Aorta (tissue), 5 donors: ENCODE measurements at regions of chr3 and their contacts with region 1.

Region 1: DNA sequence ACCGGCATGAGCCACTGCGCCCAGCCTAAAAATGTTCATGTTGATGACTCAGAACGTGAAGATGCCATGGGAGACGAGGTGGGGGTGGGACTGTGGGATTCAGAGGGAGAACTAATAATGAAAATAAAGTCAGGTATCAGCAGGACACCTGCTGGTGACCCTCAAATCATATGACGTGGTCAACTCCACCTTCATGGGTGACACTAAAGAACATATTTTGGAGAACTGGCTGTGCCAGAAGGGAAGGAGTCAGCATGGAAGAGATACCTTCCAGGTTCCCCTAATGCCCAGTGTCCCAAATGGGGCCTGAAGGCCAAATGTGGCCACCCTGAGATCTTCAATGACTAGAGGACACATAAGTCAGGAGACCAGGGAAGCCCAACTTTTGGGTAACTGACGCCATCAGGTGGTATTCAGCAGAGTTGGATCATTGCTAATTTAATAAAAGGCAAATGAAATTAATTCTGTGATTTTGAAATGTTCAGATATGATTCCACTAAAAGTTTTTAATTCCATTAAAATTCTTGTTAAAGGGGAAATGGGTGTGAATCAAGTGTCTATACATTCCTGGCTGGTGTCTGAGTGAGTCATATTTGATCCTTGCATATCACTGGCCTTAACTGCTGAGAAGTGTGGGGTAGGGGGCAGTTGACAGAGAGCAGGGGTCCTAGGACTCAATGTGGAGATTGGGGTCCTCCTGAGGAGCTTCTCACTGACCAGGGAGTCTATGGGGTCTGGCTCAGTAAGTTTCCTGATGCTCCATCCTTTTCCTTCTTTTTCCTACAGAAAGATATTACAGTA is 88.7 kb upstream of the GSK3B start:
- DNase-seq: no peak
- ATAC-seq: no peak
- H3K4me3 ChIP-seq: no peak overlapping the region
- H3K27ac ChIP-seq: no peak overlapping the region
- H3K4me1 ChIP-seq: no peaks in the 10 kb centered on the region
- H3K27me3 ChIP-seq: no peaks in the 10 kb centered on the region

Region 2: GRCh38 chr3:119161240-119161639 is 1021.7 kb before region 1 on chr3:
- intact Hi-C with region 1: no loop called
- DNase-seq: no peak
- ATAC-seq: no peak
- H3K4me3 ChIP-seq: no peak overlapping the region
- H3K27ac ChIP-seq: no peak overlapping the region
- H3K4me1 ChIP-seq: no peaks in the 10 kb centered on the region
- H3K27me3 ChIP-seq: no peaks in the 10 kb centered on the region

Region 3: DNA sequence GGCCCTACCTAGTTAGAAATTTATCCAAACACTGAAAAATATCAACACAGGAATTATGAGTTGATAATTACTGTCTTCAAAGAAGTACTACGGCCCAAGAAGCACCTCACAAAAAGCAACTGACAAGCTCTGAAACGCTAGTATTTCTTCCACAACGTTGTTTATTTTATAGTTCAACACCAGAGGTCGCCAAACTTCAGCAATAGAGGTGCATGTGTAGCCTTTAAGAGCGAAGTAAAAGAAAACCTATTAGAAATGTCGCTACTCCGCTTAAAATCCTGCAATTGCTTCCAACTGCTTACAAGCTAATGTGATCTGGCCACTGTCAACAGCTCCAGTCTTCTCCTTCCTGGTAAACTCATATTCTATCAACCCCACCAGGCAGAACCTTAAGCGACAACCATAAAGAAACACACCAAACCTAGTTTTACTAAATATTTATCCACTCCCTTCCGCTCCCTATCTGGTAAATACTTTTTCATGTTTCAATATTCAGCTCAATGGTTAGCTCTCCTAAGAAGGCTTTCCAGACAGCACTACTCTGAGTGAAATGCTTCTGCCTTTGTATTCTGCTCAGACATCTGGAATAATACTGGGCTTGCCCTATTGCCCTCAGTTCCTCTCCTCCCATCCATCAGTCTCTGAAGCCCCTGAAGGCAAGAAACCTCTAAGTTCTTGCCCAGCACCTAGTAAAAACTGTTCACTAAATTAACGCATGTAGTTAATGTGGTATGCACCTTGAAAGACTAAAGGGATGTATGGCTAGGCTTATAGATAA is 290.8 kb before region 1 on chr3:
- intact Hi-C with region 1: loop called (anchors 5 to 10 kb)
- DNase-seq: no peak
- ATAC-seq: peak; percentile 80
- H3K4me3 ChIP-seq: no peak overlapping the region
- H3K27ac ChIP-seq: no peak overlapping the region
- H3K4me1 ChIP-seq: no peaks in the 10 kb centered on the region
- H3K27me3 ChIP-seq: no peaks in the 10 kb centered on the region

Region 4: DNA sequence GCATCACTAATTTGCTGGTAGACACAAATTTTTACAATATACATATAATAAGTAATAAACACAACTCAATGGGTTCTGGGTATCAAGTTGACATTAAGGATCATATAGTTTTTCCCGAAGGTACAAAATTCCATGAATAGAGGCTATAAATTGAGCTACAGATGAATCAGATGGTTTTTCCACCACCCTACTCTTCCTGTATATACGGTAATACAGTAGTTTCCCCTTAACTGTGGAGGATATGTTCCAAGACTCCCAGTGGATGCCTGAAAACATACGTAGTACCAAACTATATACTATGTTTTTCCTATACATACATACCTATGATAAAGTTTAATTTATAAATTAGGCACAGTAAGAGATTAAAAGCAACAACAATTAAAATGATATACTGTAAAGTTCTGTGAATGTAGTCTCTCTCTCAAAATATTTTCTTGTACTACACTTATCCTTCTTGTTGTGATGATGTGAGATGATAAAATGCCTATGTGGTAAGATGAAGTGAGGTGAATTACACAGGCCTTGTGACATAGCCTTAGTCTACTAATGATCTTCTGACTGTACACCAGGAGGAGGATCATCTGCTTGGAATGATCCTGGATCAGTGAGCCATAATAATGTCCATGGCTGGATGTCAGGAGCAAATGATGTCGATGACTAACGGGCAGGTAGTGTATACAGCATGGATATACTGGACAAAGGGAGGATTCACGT is 284.3 kb before region 1 on chr3:
- intact Hi-C with region 1: loop called (anchors 5 to 10 kb)
- DNase-seq: no peak
- ATAC-seq: no peak
- H3K4me3 ChIP-seq: no peak overlapping the region
- H3K27ac ChIP-seq: no peak overlapping the region
- H3K4me1 ChIP-seq: no peaks in the 10 kb centered on the region
- H3K27me3 ChIP-seq: no peaks in the 10 kb centered on the region

Region 5: GRCh38 chr3:120214161-120214560 is 31.2 kb after region 1 on chr3:
- intact Hi-C with region 1: no loop called
- DNase-seq: no peak
- ATAC-seq: peak; percentile 29
- H3K4me3 ChIP-seq: no peak overlapping the region
- H3K27ac ChIP-seq: no peak overlapping the region
- H3K4me1 ChIP-seq: no peaks in the 10 kb centered on the region
- H3K27me3 ChIP-seq: no peaks in the 10 kb centered on the region